ENCODE measurements at regions of chr17 and their contacts with region 1.

Region 1: DNA sequence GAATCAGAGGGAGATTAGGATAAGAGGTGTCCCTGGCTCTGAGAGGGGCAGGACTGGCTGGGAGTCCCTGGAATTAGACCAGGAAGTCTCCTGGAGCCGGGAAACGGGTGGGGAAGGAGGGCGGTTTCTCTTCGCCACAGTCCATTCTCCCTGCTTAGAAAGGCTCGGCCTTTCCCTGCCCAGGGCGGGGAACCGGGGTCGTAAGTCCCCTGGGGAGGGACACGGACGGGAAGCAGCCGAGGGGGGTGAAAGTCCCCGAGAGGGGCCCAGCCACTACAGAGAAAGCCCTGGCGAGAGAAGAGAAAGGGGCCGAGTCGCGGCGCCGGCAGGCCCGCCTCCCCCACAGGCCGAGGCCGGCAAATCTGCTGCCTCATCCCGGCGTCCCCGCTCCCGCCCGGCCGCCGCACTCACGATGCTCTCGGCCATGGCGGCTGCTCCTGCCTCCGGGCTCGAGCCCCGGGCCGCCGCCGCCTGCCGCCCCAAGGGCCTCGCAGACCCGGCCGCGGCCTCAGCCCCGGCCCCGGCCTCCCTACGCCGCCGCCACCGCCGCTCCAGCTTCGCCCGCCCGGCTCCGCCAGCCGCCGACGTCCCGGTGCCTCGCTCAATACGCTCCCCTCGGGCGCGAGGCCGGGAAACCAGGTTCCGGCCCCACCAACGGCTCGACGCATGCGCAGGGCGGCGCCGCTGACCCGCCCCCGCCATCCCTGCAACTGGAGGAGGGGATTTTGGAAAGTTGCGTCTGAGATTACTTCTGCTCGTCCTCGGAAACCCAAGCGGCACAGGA is at the starts of genes NPLOC4 and TSPAN10:
- DNase-seq: peak; percentile 62 to 94 (median 80)
- ATAC-seq: peak; percentile 95
- H3K4me3 ChIP-seq: peak within 1 kb of the TSS; percentile 86
- H3K4me3 Mint-ChIP-seq: peak within 1 kb of the TSS; percentile 91 to 98 (median 95)
- H3K27ac ChIP-seq: peak within 1 kb of the TSS; percentile 87
- H3K27ac Mint-ChIP-seq: peak within 1 kb of the TSS; percentile 25 to 94 (median 89)
- H3K4me1 ChIP-seq: peaks cover 10 to 12% of the 10 kb centered on the region in 2 donors
- H3K4me1 Mint-ChIP-seq: peaks cover 13 to 37% (median 26%) of the 10 kb centered on the region in 7 donors
- H3K27me3 ChIP-seq: no peaks in the 10 kb centered on the region
- H3K27me3 Mint-ChIP-seq: no peaks in the 10 kb centered on the region
- total RNA-seq, gene NPLOC4: 77.7 to 125 (median 93.6) TPM
- total RNA-seq, gene TSPAN10: 0.32 to 1.9 (median 0.51) TPM

Region 2: DNA sequence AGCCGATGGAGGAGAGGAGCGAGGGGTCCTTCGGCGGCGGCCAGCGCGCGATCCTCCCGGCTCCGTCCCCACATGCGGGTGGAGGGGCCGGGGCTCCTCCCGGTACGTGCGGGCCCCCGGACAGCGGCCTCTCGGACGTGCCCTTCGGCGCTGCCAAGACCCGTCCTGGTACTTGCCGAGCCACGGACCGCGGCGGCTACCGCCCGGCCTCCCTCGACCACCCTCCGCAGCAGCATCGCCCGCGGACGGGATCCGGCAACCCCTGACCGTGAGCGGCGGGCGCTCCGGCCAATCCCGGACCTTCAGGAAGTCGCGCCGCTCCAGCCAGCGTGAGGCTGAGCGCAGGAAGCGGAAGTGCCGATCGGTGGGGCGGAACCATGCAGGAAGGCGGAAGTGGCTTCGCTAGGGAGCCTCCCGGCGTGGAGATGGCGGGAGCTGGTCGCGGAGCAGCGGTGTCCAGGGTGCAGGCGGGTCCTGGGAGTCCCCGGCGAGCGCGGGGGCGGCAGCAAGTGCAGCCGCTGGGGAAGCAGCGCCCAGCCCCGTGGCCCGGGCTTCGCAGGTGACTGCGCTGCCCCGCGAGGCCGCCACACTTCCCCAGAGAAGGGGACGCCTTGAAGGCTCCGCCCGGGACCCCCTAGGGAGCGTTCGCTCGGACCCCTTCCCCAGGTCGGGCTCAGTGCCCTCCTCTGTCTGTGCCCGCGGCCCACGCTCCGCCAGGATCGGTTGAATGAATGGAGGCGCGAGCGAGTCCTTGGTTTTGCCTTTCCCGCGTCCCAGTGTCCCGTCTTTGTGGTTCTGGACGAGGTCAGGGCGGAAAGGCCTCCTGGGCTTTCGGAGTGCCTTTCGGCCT is 29.9 kb after region 1 on chr17 and contains the starts of genes CCDC137 and OXLD1:
- CTCF ChIA-PET with region 1: no interaction called
- POLR2A ChIA-PET with region 1: interaction called, 5 read pairs
- intact Hi-C with region 1: loop called (anchors 1 kb)
- DNase-seq: peak; percentile 82 to 93 (median 89)
- ATAC-seq: peak; percentile 94
- H3K4me3 ChIP-seq: peak within 1 kb of the TSS; percentile 86
- H3K4me3 Mint-ChIP-seq: peak within 1 kb of the TSS; percentile 88 to 99 (median 94)
- H3K27ac ChIP-seq: peak within 1 kb of the TSS; percentile 93
- H3K27ac Mint-ChIP-seq: peak within 1 kb of the TSS; percentile 84 to 97 (median 92)
- H3K4me1 ChIP-seq: peaks cover 35 to 50% of the 10 kb centered on the region in 2 donors
- H3K4me1 Mint-ChIP-seq: peaks cover 17 to 62% (median 43%) of the 10 kb centered on the region in 7 donors
- H3K27me3 ChIP-seq: no peaks in the 10 kb centered on the region
- H3K27me3 Mint-ChIP-seq: no peaks in the 10 kb centered on the region
- total RNA-seq, gene CCDC137: 16.3 to 33.5 (median 27.1) TPM
- total RNA-seq, gene OXLD1: 35.9 to 61.9 (median 47.5) TPM

Region 3: GRCh38 chr17:81702971-81703746 is 66.5 kb after region 1 on chr17 and contains the start of gene MRPL12:
- CTCF ChIA-PET with region 1: no interaction called
- POLR2A ChIA-PET with region 1: interaction called, 5 read pairs
- intact Hi-C with region 1: loop called (anchors 1 to 2 kb)
- DNase-seq: peak; percentile 75 to 87 (median 84)
- ATAC-seq: peak; percentile 96
- H3K4me3 ChIP-seq: peak within 1 kb of the TSS; percentile 91
- H3K4me3 Mint-ChIP-seq: peak within 1 kb of the TSS; percentile 83 to 94 (median 90)
- H3K27ac ChIP-seq: peak within 1 kb of the TSS; percentile 95
- H3K27ac Mint-ChIP-seq: peak within 1 kb of the TSS; percentile 84 to 96 (median 92)
- H3K4me1 ChIP-seq: peaks cover 23 to 24% of the 10 kb centered on the region in 2 donors
- H3K4me1 Mint-ChIP-seq: peaks cover 21 to 38% (median 26%) of the 10 kb centered on the region in 7 donors
- H3K27me3 ChIP-seq: no peaks in the 10 kb centered on the region
- H3K27me3 Mint-ChIP-seq: no peaks in the 10 kb centered on the region
- total RNA-seq, gene MRPL12: 21.3 to 83.8 (median 26.6) TPM